ENCODE measurements at regions of chr1 and their contacts with region 1.

Region 1: DNA sequence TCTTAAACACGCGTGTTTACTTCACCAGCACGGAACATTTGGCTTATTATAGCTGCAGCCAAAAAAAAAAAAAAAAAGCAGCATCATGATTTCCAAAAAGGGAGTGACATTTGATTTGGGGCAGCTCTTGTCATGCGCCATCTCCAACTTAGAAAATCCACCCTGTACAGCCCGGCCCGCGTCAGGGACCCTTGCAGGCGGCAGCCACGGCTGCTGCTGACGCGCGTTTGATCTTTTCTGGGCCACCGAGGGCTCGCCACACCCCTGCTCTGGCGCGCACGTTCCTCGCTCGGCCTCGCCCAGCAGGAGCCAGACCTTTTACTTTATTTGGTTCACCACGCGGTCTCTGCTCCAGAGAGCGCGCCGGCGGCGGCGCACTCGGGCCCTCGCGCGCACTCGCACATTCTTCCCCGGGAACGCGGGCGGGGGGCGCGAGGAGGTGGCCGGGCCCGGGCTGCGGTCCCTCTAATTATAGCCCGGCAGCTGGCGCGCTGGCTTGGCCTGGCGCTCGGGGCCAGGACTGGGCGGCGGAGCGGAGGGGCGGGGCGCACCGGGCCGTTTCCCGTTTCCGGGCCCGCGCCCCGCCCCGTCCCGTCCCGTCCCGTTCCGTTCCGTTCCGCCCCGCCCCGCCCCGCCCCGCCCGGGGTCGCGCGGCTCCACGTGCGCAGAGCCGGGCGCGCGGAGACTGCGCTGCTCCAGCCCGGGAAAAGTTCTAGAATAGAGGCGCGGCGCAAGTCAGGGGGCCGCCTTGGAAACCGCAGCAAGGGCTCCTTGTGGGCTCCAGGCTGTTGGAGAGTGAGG is 10.2 kb downstream of the IRF2BP2 start:
- DNase-seq: peak; percentile 83 to 96
- H3K4me3 ChIP-seq: peak overlapping the region; percentile 6
- CTCF ChIP-seq: no peak
- POLR2A ChIP-seq: peak in 1 of 2 donors; percentile 27

Region 2: GRCh38 chr1:233647073-233647472 is 952.7 kb before region 1 on chr1:
- intact Hi-C with region 1: no loop called
- DNase-seq: no peak
- H3K4me3 ChIP-seq: no peak overlapping the region
- CTCF ChIP-seq: no peak
- POLR2A ChIP-seq: no peak

Region 3: DNA sequence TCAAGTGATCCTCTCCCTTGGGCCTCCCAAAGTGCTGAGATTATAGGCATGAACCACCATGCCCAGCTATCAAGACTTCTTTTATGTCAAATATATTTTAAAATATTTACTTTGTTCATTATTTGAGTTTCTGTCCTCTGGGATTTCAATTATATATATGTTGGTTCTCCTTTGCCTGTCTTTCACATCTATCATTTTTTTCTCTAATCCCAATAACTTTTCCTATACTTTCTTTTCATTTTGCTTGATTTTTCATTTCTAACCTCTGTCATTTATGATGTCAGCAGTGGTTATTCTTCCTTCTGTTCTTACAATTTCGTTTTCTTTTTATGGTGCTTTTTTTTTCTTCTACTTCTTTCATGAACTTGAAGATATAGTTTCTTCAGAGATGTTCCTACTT is 648.0 kb before region 1 on chr1:
- intact Hi-C with region 1: no loop called
- DNase-seq: no peak
- H3K4me3 ChIP-seq: no peak overlapping the region
- CTCF ChIP-seq: no peak
- POLR2A ChIP-seq: no peak

Region 4: DNA sequence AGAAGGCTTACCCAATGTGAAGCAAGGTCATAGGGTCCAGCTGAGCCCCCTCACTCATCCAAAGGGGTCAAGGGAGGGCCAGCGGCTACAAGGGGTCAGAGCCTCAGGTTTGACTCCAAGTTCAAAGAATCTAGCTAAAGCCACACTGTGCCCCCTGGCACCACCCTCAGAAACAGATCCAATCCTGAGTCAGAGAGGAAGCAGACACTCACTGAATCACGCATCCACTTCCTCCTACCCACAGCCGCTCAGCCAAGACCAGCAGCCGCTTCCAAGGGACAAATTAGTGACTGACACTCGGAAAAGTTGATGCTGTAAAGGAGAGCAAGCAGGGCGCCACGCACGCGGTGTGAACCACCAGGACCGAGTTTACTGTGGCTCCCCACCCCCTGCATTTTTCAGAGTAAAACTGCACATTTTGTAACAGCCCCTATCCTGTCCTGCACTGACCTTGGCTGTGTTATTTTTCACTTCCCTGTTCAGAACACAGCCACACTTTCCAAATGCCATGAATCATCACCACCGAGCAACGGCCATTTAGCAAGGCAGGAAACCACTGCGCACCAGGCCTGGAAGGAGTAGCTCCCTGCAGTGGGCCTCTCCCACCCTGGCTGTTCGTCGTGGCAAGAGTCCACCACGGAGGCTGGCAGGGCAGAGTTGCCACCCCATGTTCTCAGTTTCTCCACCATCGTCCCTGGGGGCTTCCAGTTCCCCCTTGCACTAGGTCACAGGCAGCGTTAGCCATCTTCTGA is 381.0 kb after region 1 on chr1:
- intact Hi-C with region 1: loop called (anchors 10 kb)
- DNase-seq: peak; percentile 90 to 96
- H3K4me3 ChIP-seq: no peak overlapping the region
- CTCF ChIP-seq: no peak
- POLR2A ChIP-seq: no peak

Region 5: DNA sequence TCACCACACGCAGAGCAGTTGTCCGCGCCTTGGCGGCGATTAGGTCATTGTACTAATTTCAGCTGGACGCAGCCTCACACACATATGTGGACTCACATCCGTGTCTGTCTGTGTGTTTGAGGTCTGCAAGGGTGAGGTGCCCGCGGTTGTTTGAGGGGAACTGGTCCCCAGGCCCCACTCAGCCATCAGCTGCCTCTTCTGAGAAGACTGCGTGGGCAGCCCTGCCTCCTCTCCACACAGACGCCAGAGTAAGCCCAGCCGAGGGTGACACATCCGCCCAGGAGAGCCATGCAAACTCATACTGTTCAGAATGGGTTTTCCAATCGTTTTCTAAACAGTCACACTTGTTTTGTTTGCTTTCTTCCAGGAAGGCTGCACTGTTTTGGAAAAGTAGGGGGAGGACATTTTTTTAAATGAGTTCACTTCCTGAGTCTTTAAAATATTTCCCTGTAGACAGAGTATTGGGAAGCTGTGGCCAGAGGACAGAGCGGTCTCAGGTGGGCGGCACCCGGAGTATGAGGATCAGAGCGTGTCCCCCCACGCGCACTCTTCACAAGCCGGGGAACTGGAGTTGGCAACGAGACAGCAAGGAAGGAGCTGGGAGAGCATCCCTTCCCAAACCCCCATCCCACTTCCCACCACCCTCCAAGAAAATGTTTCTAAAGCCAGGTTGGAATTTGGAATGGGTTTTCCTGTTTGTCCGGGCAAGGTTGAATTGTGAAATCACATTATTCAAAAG is 475.5 kb after region 1 on chr1:
- intact Hi-C with region 1: loop called (anchors 5 kb)
- DNase-seq: peak in 1 of 2 donors; percentile 91
- H3K4me3 ChIP-seq: no peak overlapping the region
- CTCF ChIP-seq: no peak
- POLR2A ChIP-seq: no peak